Sciatic nerve (tissue), 2 donors: ENCODE measurements at regions of chr10 and their contacts with region 1.

Region 1: DNA sequence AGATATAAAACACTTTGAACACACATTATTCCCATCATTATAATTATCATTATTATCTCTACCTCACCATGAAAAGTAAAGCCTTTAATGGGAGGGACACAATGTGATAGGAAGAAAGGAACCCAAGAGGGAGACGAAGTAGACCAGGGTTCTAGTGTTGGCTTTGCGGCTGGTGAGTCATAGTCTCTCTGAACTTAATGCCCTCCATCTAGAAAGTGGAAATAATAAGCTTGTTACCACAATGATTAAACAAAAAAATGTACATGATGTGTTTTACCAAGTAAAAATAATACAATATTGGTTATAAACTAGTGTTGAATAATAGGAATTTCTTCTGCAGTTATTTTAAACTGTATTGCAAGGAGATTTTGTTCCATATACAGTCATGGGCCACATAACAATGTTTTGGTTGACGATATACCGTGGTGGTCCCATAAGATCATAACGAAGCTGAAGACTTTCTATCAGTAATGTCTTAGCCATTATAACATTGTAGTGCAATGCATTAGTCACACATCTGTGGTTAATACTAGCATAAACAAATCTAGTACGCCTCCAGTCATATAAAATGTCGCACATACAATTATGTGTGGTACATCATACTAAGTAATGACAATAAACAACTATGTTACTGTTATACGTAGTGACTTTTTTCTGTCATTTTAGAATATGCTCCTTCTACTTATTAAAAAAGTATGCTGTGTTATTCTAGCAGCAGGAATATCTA is 450.6 kb upstream of the SORCS1 start:
- DNase-seq: no peak
- ATAC-seq: no peak

Region 2: GRCh38 chr10:106761906-106762305 is 853.2 kb before region 1 on chr10:
- intact Hi-C with region 1: loop called (anchors 5 kb)
- DNase-seq: no peak
- ATAC-seq: no peak

Region 3: GRCh38 chr10:107546287-107546686 is 68.8 kb before region 1 on chr10:
- intact Hi-C with region 1: no loop called
- DNase-seq: no peak
- ATAC-seq: no peak

Region 4: DNA sequence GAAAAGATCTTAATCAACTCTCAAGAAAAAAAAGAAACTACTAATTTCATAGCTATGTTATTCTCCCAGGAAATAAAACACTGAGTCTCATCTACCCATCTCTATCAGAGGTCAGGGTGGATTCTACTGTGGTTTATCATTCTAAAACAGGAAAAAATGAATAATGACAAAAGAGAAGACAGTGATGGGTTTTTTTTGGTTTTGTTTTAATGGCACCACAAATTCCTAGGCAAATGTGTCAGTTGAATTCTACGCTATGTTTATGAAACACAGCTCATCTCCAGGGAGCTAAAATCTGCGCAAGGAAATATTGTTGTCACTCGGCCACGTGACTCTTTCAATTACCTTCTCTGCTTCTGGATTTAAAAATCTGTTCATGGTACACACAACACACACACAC is 57.2 kb before region 1 on chr10:
- intact Hi-C with region 1: no loop called
- DNase-seq: no peak
- ATAC-seq: no peak

Region 5: GRCh38 chr10:108404155-108404554 is 789.1 kb after region 1 on chr10:
- intact Hi-C with region 1: no loop called
- DNase-seq: no peak
- ATAC-seq: no peak